ENCODE measurements at regions of chr5 and their contacts with region 1.

Region 1: DNA sequence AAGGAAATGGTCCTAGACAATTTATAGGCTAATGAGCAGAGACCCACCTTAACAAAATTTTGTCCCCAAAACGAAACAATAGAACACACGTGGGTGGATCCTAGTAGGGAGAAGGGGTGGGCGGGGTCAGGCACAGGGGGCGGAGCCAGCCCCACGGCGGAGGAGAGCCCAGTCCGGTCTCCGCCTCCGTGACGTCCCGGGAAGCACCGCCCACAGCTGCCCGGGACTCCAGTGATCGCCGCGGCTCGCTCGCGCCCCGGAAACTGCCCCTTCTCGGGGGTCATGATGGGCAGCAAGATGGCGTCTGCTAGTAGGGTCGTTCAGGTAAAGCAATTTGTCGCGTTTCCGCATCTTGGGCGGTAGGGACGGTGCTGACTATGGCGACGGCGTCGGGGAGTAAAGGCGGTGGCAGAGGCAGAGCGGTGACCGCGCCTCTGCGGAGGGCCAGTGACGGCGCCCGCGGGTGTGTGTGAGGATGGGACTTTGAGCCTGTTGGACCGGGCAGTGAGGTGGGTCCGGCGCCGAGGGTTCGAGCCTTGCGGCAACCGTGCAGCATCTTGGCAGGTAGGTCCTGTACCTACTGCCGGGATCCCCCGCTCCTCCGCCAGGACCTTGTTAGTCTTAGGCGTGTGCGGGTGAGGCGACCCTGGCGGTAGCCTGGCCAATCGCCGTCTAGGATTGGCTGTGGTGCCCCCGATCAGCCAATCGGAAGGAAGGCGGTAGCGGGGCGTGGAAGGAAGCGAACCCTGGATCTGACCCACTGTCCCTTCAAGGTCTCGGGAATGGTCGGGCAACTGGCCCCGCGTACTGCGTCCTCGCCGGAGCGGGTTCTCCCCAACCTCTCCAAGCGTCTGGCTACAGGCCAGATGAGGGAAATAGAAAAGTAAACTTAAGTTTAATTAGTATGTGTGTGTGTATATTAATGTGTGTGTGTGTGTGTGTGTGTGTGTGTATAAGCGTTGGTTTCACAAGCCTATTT is 16.8 kb upstream of the CDK7 start:
- DNase-seq: peak; percentile 90
- ATAC-seq: peak; percentile 89
- H3K4me3 Mint-ChIP-seq: peak overlapping the region; percentile 100
- H3K27ac Mint-ChIP-seq: peak overlapping the region; percentile 98
- H3K4me1 Mint-ChIP-seq: peaks cover 24% of the 10 kb centered on the region
- H3K27me3 Mint-ChIP-seq: no peaks in the 10 kb centered on the region
- CTCF ChIP-seq: no peak

Region 2: GRCh38 chr5:69042915-69043658 is 174.8 kb before region 1 on chr5:
- CTCF ChIA-PET with region 1: no interaction called
- POLR2A ChIA-PET with region 1: no interaction called
- intact Hi-C with region 1: loop called (anchors 2 kb)
- DNase-seq: peak; percentile 29
- ATAC-seq: peak; percentile 96
- H3K4me3 Mint-ChIP-seq: peak overlapping the region; percentile 84
- H3K27ac Mint-ChIP-seq: peak overlapping the region; percentile 79
- H3K4me1 Mint-ChIP-seq: no peaks in the 10 kb centered on the region
- H3K27me3 Mint-ChIP-seq: no peaks in the 10 kb centered on the region
- CTCF ChIP-seq: peak; percentile 27

Region 3: GRCh38 chr5:69105996-69106906 is 111.6 kb before region 1 on chr5:
- CTCF ChIA-PET with region 1: no interaction called
- POLR2A ChIA-PET with region 1: interaction called, 4 read pairs
- intact Hi-C with region 1: loop called (anchors 5 kb)
- DNase-seq: no peak
- ATAC-seq: peak; percentile 97
- H3K4me3 Mint-ChIP-seq: no peak overlapping the region
- H3K27ac Mint-ChIP-seq: peak overlapping the region; percentile 79
- H3K4me1 Mint-ChIP-seq: peaks cover 14% of the 10 kb centered on the region
- H3K27me3 Mint-ChIP-seq: no peaks in the 10 kb centered on the region
- CTCF ChIP-seq: no peak

Region 4: GRCh38 chr5:69189162-69190086 is 28.4 kb before region 1 on chr5 and contains the start of gene CENPH:
- CTCF ChIA-PET with region 1: no interaction called
- POLR2A ChIA-PET with region 1: interaction called, 11 read pairs
- intact Hi-C with region 1: loop called (anchors 1 kb)
- DNase-seq: peak; percentile 88
- ATAC-seq: peak; percentile 92
- H3K4me3 Mint-ChIP-seq: peak within 1 kb of the TSS; percentile 92
- H3K27ac Mint-ChIP-seq: peak within 1 kb of the TSS; percentile 90
- H3K4me1 Mint-ChIP-seq: peaks cover 14% of the 10 kb centered on the region
- H3K27me3 Mint-ChIP-seq: no peaks in the 10 kb centered on the region
- CTCF ChIP-seq: no peak
- total RNA-seq, gene CENPH: 13.0 and 13.5 TPM in 2 replicates

Region 5: GRCh38 chr5:69234457-69235268 is 16.8 kb after region 1 on chr5 and contains the start of gene CDK7:
- CTCF ChIA-PET with region 1: no interaction called
- POLR2A ChIA-PET with region 1: interaction called, 23 read pairs
- intact Hi-C with region 1: loop called (anchors 1 kb)
- DNase-seq: peak; percentile 88
- ATAC-seq: peak; percentile 100
- H3K4me3 Mint-ChIP-seq: peak within 1 kb of the TSS; percentile 97
- H3K27ac Mint-ChIP-seq: peak within 1 kb of the TSS; percentile 88
- H3K4me1 Mint-ChIP-seq: peaks cover 35% of the 10 kb centered on the region
- H3K27me3 Mint-ChIP-seq: no peaks in the 10 kb centered on the region
- CTCF ChIP-seq: no peak
- total RNA-seq, gene CDK7: 27.1 and 33.5 TPM in 2 replicates

Region 6: DNA sequence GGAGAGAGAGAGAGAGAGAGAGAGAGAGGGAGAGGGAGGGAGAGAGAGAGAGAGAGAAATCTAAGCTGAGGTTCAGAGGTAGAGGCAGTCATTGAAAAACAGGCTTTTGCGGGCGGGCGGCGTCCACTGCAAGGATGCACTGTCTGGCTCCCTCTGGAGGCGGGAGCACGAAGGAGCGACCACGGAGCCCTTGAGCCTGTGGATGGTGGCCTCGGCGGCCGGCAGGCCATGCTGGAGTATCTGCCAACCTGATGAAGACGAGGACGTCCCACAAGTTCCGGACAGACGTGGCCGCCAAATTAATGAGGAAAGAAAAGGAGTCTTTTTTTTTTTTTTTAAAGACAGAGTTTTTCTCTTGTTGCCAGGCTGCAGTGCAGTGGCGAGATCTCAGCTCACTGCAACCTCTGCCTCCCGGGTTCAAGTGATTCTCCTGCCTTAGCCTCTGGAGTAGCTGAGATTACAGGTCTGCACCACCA is 117.0 kb after region 1 on chr5:
- CTCF ChIA-PET with region 1: no interaction called
- POLR2A ChIA-PET with region 1: no interaction called
- intact Hi-C with region 1: loop called (anchors 1 kb)
- DNase-seq: peak; percentile 56
- ATAC-seq: peak; percentile 72
- H3K4me3 Mint-ChIP-seq: peak overlapping the region; percentile 46
- H3K27ac Mint-ChIP-seq: peak overlapping the region; percentile 59
- H3K4me1 Mint-ChIP-seq: peaks cover 25% of the 10 kb centered on the region
- H3K27me3 Mint-ChIP-seq: no peaks in the 10 kb centered on the region
- CTCF ChIP-seq: no peak

Region 7: DNA sequence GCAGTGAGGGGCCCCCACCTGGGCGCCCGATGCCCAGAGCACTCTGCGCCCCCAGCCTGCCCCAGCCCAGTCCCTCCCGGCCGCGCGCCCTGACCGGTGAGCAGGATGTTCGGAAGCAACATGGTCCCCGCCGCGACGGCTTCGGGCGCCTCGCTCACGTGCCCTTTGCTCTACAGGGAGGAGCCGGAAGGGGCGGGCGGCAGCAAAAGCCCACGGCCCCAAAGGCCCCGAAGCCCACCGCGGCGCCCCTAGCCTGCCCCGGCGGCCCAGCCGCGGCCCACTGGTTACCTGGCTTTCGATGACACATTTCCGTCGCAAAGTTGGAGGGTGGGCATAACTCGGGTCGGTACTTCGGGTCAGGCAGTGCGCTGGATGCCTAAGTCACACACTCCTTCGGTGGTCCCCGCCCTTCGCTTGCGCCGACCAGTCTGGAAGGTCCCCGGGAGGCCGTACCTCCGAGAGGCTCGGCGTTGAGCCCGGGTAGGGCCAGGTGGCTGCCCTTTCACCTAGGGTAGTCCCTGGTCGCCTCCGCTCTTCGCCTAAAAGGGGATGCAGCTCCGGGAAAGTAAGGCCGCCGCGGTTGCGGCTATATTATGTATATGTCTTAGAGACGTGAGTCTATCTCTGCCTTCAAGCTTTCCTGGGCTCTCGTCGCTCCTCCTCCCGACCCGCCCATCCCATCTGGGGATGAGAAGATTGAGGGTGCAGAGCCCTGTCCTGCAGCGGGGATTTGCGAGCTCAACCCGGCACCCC is 151.7 kb after region 1 on chr5 and contains the starts of genes AK6, RAD17 and TAF9:
- CTCF ChIA-PET with region 1: no interaction called
- POLR2A ChIA-PET with region 1: no interaction called
- intact Hi-C with region 1: loop called (anchors 1 kb)
- DNase-seq: peak; percentile 93
- ATAC-seq: peak; percentile 94
- H3K4me3 Mint-ChIP-seq: peak within 1 kb of the TSS; percentile 97
- H3K27ac Mint-ChIP-seq: peak within 1 kb of the TSS; percentile 98
- H3K4me1 Mint-ChIP-seq: peaks cover 53% of the 10 kb centered on the region
- H3K27me3 Mint-ChIP-seq: no peaks in the 10 kb centered on the region
- CTCF ChIP-seq: no peak
- total RNA-seq, gene AK6: 38.6 and 39.3 TPM in 2 replicates
- total RNA-seq, gene RAD17: 25.9 and 30.6 TPM in 2 replicates
- total RNA-seq, gene TAF9: 44.7 and 45.4 TPM in 2 replicates

Measured in activated B cell treated with CpG ODN at 0.5 μM for 24 hours (primary cell).